Kidney (tissue), 22 donors: ENCODE measurements at regions of chr10 and their contacts with region 1.

Region 1: DNA sequence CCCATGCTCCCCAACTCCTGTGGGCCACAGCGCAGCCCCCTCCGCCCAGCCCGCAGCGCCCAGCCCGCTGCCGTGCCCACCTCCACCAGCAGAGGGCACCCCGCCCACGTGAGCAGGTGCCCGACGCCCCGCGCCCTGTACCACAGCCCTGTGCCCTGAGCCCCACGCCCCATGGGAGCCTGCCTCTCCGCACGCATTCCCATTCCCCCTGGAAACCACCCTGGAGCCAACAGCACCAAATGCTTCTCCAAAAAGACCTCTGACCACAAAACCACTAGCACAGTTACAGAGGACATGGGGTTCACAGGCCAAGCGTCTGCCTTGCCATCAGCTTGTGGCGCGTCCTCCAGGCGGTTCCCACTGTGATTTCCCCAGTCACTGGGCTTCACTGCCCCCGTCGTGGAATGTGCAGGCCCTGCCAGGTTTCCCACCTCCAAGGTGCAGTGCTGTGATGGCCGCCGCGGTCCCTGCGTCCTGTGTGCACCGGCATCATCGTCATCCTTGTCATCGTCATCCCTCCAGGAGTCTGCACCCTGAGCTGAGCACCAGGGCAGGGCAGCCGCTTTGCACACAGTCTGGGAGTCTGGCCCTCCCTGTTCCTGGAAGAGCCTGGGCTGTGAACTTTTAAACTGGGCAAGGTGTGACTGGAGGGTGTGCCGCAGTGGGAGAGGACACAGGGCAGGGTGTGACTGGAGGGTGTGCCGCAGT is 61.7 kb downstream of the PWWP2B start:
- DNase-seq: peak in 3 of 5 donors; percentile 52 to 81 (median 69)
- H3K4me3 ChIP-seq: no peak overlapping the region
- H3K27ac ChIP-seq: no peak overlapping the region
- H3K4me1 ChIP-seq: peaks cover 0 to 14% (median 6%) of the 10 kb centered on the region in 3 donors
- H3K27me3 ChIP-seq: no peaks in the 10 kb centered on the region
- CTCF ChIP-seq: peak; percentile 98

Region 2: GRCh38 chr10:131556897-131557495 is 901.8 kb before region 1 on chr10:
- intact Hi-C with region 1: no loop called
- DNase-seq: peak in 2 of 5 donors; percentile 18 to 34
- H3K4me3 ChIP-seq: no peak overlapping the region
- H3K27ac ChIP-seq: no peak overlapping the region
- H3K4me1 ChIP-seq: no peaks in the 10 kb centered on the region
- H3K27me3 ChIP-seq: no peaks in the 10 kb centered on the region
- CTCF ChIP-seq: no peak

Region 3: DNA sequence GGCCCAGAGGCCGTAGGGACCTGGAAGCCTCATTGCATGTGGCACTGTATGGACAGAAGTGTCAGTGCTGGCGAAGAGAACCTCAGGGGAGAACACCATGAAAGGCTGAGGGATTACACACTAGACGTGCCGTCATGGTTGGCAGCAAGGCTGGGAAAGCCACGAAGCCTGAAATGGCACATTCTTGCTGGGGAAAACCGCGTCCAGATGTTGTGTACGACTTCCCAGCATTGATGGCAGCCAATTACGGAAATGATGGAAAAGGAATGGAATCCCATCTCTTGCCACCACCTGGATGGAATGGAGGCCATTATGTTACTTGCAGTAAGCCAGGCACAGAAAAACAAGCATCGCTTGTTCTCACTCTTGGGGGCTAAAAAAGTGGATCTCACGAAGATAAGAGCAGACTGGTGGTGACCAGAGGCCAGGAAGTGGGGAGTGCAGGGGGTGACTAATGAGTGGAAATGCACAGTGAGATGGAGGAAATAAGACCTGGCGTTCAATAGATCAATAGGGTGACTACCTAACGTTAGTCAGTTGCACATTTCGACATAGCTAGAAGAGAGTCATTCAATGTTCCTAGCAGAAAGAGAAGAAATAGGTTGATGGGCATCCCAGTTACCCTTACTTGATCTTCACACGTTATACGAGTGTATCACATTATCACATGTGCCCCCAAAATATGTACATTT is 76.4 kb before region 1 on chr10:
- intact Hi-C with region 1: loop called (anchors 5 kb)
- DNase-seq: peak in 1 of 5 donors; percentile 25
- H3K4me3 ChIP-seq: no peak overlapping the region
- H3K27ac ChIP-seq: no peak overlapping the region
- H3K4me1 ChIP-seq: no peaks in the 10 kb centered on the region
- H3K27me3 ChIP-seq: no peaks in the 10 kb centered on the region
- CTCF ChIP-seq: no peak

Region 4: DNA sequence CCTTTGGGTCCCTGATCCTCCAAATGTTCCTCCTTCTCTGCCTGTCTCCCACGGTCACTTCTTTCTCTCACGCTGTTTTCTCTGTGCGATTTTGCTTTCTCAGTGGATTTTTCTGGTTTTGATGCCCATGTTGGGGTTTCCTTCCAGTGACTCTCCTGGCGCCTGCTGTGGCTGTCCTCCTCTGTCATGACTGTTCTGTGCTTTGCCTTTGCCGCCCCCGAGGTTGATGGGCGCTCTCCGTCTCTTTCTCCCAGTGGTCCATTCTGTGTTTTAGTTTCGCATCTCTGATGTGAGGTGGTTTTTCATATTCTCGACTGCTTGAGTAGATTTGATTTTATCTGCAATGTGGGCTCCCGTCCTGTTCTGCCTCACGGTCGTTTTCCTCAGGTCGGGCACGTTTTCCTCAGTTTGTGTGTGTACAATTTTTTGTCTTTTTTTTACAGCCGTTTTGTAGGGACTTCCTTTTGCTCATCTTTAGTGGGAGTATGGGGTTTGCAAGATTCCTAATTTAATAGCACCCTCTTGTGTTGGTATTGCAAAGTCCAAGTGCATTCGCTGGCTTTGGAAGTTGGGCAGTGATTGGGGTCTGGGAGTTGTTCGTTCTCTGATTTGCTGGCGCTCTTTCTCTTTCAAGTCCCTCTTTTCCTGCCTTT is 178.9 kb after region 1 on chr10:
- intact Hi-C with region 1: loop called (anchors 2 kb)
- DNase-seq: peak in 4 of 5 donors; percentile 47 to 90 (median 75)
- H3K4me3 ChIP-seq: no peak overlapping the region
- H3K27ac ChIP-seq: no peak overlapping the region
- H3K4me1 ChIP-seq: peaks cover 0 to 7% (median 0%) of the 10 kb centered on the region in 3 donors
- H3K27me3 ChIP-seq: no peaks in the 10 kb centered on the region
- CTCF ChIP-seq: peak; percentile 61